ENCODE measurements at regions of chr1 and their contacts with region 1.

Region 1: GRCh38 chr1:160251687-160252526 is 10.4 kb downstream of the DCAF8 start:
- DNase-seq: peak; percentile 72
- ATAC-seq: peak; percentile 89
- H3K4me3 Mint-ChIP-seq: no peak overlapping the region
- H3K27ac Mint-ChIP-seq: no peak overlapping the region
- H3K4me1 Mint-ChIP-seq: peaks cover 2% of the 10 kb centered on the region
- H3K27me3 Mint-ChIP-seq: no peaks in the 10 kb centered on the region

Region 2: GRCh38 chr1:160098852-160099561 is 152.9 kb before region 1 on chr1:
- CTCF ChIA-PET with region 1: interaction called, 91 read pairs
- POLR2A ChIA-PET with region 1: no interaction called
- DNase-seq: peak; percentile 99
- ATAC-seq: peak; percentile 89
- H3K4me3 Mint-ChIP-seq: peak overlapping the region; percentile 73
- H3K27ac Mint-ChIP-seq: peak overlapping the region; percentile 88
- H3K4me1 Mint-ChIP-seq: peaks cover 55% of the 10 kb centered on the region
- H3K27me3 Mint-ChIP-seq: no peaks in the 10 kb centered on the region

Region 3: DNA sequence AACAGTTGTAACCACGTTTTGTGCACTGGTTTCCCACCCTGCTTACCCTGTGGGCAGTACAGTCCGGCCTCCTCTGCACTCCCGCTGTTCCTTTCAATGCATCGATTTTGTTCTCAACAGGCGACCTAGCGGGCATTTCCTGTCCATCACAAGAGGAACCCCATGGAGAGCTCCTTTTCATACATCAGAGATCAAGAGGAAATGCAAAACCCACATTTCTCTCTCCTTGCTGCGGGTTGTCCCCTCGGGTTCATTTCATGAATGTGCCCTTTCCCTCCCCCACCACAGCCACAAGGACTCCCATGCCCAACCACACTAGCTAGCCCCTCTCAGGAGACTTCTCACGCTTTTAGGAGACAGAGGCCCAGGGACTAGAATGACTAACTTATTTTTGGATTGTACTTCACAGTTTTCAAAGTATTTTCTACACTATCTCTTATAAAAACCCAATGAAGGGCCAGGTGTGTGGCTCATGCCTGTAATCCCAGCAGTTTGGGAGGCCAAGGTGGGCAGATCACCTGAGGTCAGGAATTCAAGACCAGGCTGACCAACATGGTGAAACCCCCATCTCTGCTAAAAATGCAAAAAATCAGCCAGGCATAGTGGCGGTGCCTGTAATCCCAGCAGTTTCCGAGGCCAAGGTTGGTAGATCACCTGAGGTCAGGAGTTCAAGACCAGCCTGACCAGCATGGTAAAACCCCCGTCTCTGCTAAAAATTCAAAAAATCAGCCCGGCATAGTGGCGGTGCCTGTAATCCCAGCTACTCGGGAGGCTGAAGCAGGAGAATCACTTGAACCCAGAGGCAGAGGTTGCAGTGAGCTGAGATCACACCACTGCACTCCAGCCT is 82.1 kb before region 1 on chr1:
- CTCF ChIA-PET with region 1: interaction called, 10 read pairs
- POLR2A ChIA-PET with region 1: no interaction called
- DNase-seq: peak; percentile 54
- ATAC-seq: peak; percentile 56
- H3K4me3 Mint-ChIP-seq: no peak overlapping the region
- H3K27ac Mint-ChIP-seq: no peak overlapping the region
- H3K4me1 Mint-ChIP-seq: peaks cover 23% of the 10 kb centered on the region
- H3K27me3 Mint-ChIP-seq: peaks cover 33% of the 10 kb centered on the region

Region 4: GRCh38 chr1:160205242-160206035 is 46.5 kb before region 1 on chr1 and contains the start of gene PEA15:
- CTCF ChIA-PET with region 1: interaction called, 16 read pairs
- POLR2A ChIA-PET with region 1: no interaction called
- DNase-seq: peak; percentile 68
- ATAC-seq: peak; percentile 91
- H3K4me3 Mint-ChIP-seq: peak within 1 kb of the TSS; percentile 84
- H3K27ac Mint-ChIP-seq: peak within 1 kb of the TSS; percentile 86
- H3K4me1 Mint-ChIP-seq: peaks cover 26% of the 10 kb centered on the region
- H3K27me3 Mint-ChIP-seq: no peaks in the 10 kb centered on the region
- total RNA-seq, gene PEA15: 27.3 to 35.2 TPM

Region 5: GRCh38 chr1:160226623-160227022 is 25.3 kb before region 1 on chr1:
- CTCF ChIA-PET with region 1: interaction called, 14 read pairs
- POLR2A ChIA-PET with region 1: interaction called, 4 read pairs
- DNase-seq: no peak
- ATAC-seq: no peak
- H3K4me3 Mint-ChIP-seq: no peak overlapping the region
- H3K27ac Mint-ChIP-seq: no peak overlapping the region
- H3K4me1 Mint-ChIP-seq: no peaks in the 10 kb centered on the region
- H3K27me3 Mint-ChIP-seq: no peaks in the 10 kb centered on the region

Region 6: GRCh38 chr1:160261893-160262794 is 10.2 kb after region 1 on chr1 and contains the start of gene DCAF8:
- CTCF ChIA-PET with region 1: interaction called, 58 read pairs
- POLR2A ChIA-PET with region 1: interaction called, 5 read pairs
- DNase-seq: peak; percentile 99
- ATAC-seq: peak; percentile 92
- H3K4me3 Mint-ChIP-seq: peak within 1 kb of the TSS; percentile 96
- H3K27ac Mint-ChIP-seq: peak within 1 kb of the TSS; percentile 95
- H3K4me1 Mint-ChIP-seq: peaks cover 33% of the 10 kb centered on the region
- H3K27me3 Mint-ChIP-seq: no peaks in the 10 kb centered on the region
- total RNA-seq, gene DCAF8: 81.9 to 85.9 TPM

Measured in activated CD8-positive, alpha-beta T cell treated with anti-CD3 and anti-CD28 coated beads, Interleukin-2, amount 10 ng/mL, durations not matched to agents 7 days and 5 days (primary cell).